ENCODE measurements at regions of chr7 and their contacts with region 1.

Region 1: DNA sequence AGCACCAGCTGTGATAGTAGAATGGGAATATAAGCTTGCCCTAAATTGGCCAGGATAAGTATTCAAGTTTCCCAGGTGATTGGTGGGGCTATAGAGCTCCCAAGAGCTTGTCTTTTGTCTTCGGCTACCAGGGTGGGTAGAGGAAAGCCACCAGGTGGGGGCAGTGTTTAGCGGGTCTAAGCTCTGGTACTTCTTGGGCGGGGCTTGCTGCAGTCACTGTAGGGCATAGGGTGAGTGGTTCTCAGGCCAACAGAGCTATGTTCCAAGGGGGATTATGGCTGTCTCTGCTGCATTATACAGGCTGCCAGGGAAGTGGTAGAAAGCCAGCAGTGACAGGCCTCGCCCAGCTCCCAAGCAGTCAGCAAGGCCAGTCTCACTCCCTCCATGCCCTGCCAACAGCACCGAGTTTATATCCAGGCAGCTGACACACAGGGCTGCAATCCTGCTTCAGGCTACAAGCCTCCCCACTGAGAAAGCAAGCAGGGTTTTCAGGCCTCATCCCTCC is 110.7 kb downstream of the ZNF467 start:
- DNase-seq: no peak
- H3K4me3 ChIP-seq: no peak overlapping the region
- H3K27me3 ChIP-seq: peaks cover 2% of the 10 kb centered on the region
- CTCF ChIP-seq: peak; percentile 64

Region 2: DNA sequence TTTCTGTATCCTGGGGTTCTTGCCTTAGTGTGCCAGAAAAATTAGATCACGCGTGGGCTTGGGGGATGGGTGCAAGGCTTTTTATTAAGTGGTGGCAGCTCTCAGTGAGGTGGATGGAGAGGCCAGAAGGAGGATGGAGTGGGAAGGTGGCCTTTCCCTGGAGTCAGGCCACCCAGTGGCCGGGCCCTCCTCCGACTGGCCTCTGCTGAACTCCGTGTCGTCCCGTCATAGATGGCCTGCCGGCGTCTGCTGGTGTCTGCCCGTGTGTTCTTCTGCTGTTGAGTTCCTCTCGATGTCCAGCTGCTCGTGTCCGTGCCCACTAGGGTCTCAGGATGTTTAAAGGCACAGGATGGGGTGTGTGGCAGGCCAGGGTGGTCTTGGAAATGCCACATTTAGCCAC is 161.0 kb before region 1 on chr7:
- CTCF ChIA-PET with region 1: no interaction called
- POLR2A ChIA-PET with region 1: no interaction called
- DNase-seq: no peak
- H3K4me3 ChIP-seq: no peak overlapping the region
- H3K27me3 ChIP-seq: peaks cover 8% of the 10 kb centered on the region
- CTCF ChIP-seq: no peak

Region 3: DNA sequence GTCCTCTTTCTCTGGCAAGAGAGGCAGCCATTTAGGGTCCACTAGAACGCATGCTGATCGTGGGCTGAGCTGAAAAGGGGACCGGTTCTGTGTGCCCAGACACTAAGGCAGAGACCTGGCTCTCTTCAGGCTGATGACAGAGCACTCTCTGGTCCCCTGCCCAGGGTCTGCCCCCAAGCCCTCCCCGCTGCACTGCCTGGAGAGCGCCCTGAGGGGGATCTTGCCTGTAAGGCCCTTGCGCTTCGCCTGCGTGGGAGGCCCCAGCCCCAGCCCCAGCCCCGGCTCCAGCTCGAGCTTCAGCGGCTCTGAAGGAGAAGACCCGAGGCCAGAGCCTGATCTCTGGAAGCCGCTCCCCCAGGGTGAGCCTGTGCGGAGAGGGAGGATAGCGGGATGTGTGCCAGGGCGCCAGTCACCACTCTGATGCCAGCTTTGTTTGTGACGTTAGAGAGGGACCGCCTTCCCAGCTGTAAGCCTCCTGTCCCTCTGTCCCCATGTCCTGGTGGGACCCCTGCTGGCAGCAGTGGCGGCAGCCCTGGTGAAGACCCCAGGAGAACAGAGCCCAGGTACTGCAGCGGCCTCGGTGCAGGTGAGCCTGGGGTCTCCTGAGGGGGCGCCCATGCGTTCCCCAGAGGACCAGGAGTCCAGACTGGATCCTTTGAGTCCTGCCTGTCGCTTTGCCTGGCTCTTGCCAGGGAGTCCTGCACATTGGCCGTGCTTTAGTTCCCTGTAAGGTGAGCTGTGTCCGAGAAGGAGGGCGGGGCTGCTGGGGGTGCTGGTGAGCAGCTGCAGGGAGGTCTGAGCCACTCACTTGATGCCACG is 67.5 kb after region 1 on chr7:
- CTCF ChIA-PET with region 1: interaction called, 10 read pairs
- POLR2A ChIA-PET with region 1: no interaction called
- DNase-seq: no peak
- H3K4me3 ChIP-seq: no peak overlapping the region
- H3K27me3 ChIP-seq: no peaks in the 10 kb centered on the region
- CTCF ChIP-seq: no peak

Region 4: DNA sequence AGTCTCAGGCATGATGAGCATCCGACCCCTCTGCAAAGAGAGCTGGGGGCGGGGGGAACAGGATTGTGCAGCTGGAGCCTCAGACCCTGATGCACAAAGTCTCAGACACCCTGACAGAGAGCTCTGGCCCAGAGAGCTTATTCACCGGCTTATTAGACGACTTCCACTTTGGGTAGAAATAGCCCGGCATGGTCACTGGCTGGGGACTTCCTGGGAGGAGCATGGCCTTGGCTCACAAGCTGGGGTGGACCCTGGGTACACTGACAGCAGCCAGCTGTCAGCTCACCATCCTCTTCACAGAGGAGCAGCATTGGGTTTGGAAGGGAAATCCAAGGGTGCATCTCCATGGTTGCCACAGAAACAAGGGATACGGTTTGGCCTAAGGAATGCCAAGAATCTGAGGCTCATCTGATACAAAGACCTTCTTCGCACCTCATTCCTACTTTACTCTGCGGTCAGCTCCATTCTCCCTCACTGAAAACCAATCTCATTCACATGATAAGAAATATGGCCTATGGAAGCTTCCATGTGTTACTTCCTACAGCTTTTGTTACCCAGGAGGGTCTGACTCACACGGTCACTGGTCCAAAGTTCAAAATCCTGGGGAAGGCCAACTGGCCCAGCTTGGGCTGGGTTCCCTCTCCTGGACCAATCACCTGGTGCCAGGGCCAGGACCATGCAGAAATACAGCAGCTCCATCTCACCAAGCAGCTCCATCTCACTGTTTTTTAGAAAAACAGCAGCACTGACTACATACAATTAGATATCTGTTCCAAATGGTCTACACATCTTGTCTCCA is 85.6 kb after region 1 on chr7:
- CTCF ChIA-PET with region 1: interaction called, 116 read pairs
- POLR2A ChIA-PET with region 1: no interaction called
- DNase-seq: no peak
- H3K4me3 ChIP-seq: no peak overlapping the region
- H3K27me3 ChIP-seq: peaks cover 2% of the 10 kb centered on the region
- CTCF ChIP-seq: no peak

Region 5: GRCh38 chr7:149760538-149760937 is 97.9 kb after region 1 on chr7:
- CTCF ChIA-PET with region 1: no interaction called
- POLR2A ChIA-PET with region 1: no interaction called
- DNase-seq: no peak
- H3K4me3 ChIP-seq: no peak overlapping the region
- H3K27me3 ChIP-seq: peaks cover 14% of the 10 kb centered on the region
- CTCF ChIP-seq: no peak